Endothelial cell of umbilical vein (primary cell): ENCODE measurements at regions of chr19 and their contacts with region 1.

Region 1: GRCh38 chr19:46265217-46265828 is 31.5 kb upstream of the HIF3A start:
- DNase-seq: peak; percentile 83
- H3K4me3 ChIP-seq: no peak overlapping the region
- H3K27ac ChIP-seq: no peak overlapping the region
- H3K4me1 ChIP-seq: peaks cover 6% of the 10 kb centered on the region
- H3K27me3 ChIP-seq: peaks cover 5 to 7% of the 10 kb centered on the region in 2 experiments
- CTCF ChIP-seq: peak; percentile 61 to 73
- POLR2A ChIP-seq: no peak

Region 2: GRCh38 chr19:46021531-46022041 is 243.7 kb before region 1 on chr19:
- CTCF ChIA-PET with region 1: interaction called, 11 read pairs
- POLR2A ChIA-PET with region 1: no interaction called
- dilution Hi-C with region 1: no loop called
- intact Hi-C with region 1: no loop called
- DNase-seq: no peak
- H3K4me3 ChIP-seq: no peak overlapping the region
- H3K27ac ChIP-seq: no peak overlapping the region
- H3K4me1 ChIP-seq: peaks cover 5% of the 10 kb centered on the region
- H3K27me3 ChIP-seq: peaks cover 2 to 5% of the 10 kb centered on the region in 2 experiments
- CTCF ChIP-seq: no peak
- POLR2A ChIP-seq: no peak

Region 3: GRCh38 chr19:46173886-46174507 is 91.3 kb before region 1 on chr19:
- CTCF ChIA-PET with region 1: no interaction called
- POLR2A ChIA-PET with region 1: no interaction called
- dilution Hi-C with region 1: no loop called
- intact Hi-C with region 1: no loop called
- DNase-seq: no peak
- H3K4me3 ChIP-seq: no peak overlapping the region
- H3K27ac ChIP-seq: no peak overlapping the region
- H3K4me1 ChIP-seq: no peaks in the 10 kb centered on the region
- H3K27me3 ChIP-seq: peaks cover 8 to 17% of the 10 kb centered on the region in 2 experiments
- CTCF ChIP-seq: no peak
- POLR2A ChIP-seq: no peak

Region 4: DNA sequence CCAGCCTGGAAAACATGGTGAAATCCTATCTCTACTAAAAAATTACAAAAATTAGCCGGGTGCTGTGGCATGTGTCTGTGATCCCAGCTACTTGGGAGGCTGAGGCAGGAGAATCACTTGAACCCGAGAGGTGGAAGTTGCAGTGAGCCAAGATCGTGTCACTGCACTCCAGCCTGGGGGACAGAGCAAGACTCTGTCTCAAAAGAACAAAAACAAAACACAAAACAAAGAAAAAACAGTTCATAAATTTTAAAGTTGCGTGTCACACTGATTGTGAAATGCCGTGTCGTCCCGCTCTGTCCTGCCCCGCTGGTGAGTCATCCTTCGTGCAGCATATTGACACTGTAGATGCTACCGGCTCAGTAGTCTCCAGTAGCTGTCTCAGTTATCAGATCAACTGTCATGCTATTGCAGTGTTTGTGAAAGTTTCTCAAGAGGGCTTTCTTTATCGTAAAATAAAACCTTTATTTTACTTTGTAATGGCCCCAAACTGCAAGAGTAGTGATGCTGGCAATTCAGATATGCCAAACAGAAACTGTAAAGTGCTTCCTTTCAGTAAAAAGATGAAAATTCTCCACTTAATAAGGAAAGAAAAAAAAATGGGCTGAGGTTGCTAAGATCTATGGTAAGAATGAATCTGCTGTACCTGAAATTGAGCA is 72.2 kb before region 1 on chr19:
- CTCF ChIA-PET with region 1: interaction called, 40 read pairs
- POLR2A ChIA-PET with region 1: no interaction called
- dilution Hi-C with region 1: no loop called
- intact Hi-C with region 1: loop called (anchors 2 kb)
- DNase-seq: no peak
- H3K4me3 ChIP-seq: no peak overlapping the region
- H3K27ac ChIP-seq: no peak overlapping the region
- H3K4me1 ChIP-seq: no peaks in the 10 kb centered on the region
- H3K27me3 ChIP-seq: peaks cover 3 to 19% of the 10 kb centered on the region in 2 experiments
- CTCF ChIP-seq: no peak
- POLR2A ChIP-seq: no peak

Region 5: GRCh38 chr19:46232029-46232428 is 33.3 kb before region 1 on chr19:
- CTCF ChIA-PET with region 1: interaction called, 10 read pairs
- POLR2A ChIA-PET with region 1: no interaction called
- dilution Hi-C with region 1: no loop called
- intact Hi-C with region 1: no loop called
- DNase-seq: no peak
- H3K4me3 ChIP-seq: no peak overlapping the region
- H3K27ac ChIP-seq: no peak overlapping the region
- H3K4me1 ChIP-seq: no peaks in the 10 kb centered on the region
- H3K27me3 ChIP-seq: peaks cover 3 to 4% of the 10 kb centered on the region in 2 experiments
- CTCF ChIP-seq: no peak
- POLR2A ChIP-seq: no peak